Ascending aorta (tissue), 2 donors: ENCODE measurements at regions of chr21 and their contacts with region 1.

Region 1: GRCh38 chr21:38985568-38986378 is 180.0 kb downstream of the ETS2 start:
- DNase-seq: peak; percentile 39 to 88
- H3K4me3 ChIP-seq: peak overlapping the region in 1 of 2 donors; percentile 20
- H3K27ac ChIP-seq: peak overlapping the region; percentile 70 to 76
- H3K4me1 ChIP-seq: peaks cover 25 to 55% of the 10 kb centered on the region in 2 donors
- H3K27me3 ChIP-seq: no peaks in the 10 kb centered on the region
- CTCF ChIP-seq: no peak

Region 2: GRCh38 chr21:38787461-38788274 is 198.1 kb before region 1 on chr21:
- intact Hi-C with region 1: no loop called
- DNase-seq: peak in 1 of 2 donors; percentile 58
- H3K4me3 ChIP-seq: no peak overlapping the region
- H3K27ac ChIP-seq: no peak overlapping the region
- H3K4me1 ChIP-seq: no peaks in the 10 kb centered on the region
- H3K27me3 ChIP-seq: no peaks in the 10 kb centered on the region
- CTCF ChIP-seq: no peak

Region 3: GRCh38 chr21:39071623-39072214 is 85.9 kb after region 1 on chr21:
- intact Hi-C with region 1: loop called (anchors 5 kb)
- DNase-seq: peak in 1 of 2 donors; percentile 61
- H3K4me3 ChIP-seq: no peak overlapping the region
- H3K27ac ChIP-seq: peak overlapping the region; percentile 47 to 63
- H3K4me1 ChIP-seq: peaks cover 0 to 32% of the 10 kb centered on the region in 2 donors
- H3K27me3 ChIP-seq: no peaks in the 10 kb centered on the region
- CTCF ChIP-seq: no peak